ENCODE measurements at regions of chr18 and their contacts with region 1.

Region 1: GRCh38 chr18:32552421-32553030 is 81.8 kb upstream of the GAREM1 start:
- DNase-seq: peak; percentile 78 to 86 (median 84)
- ATAC-seq: peak; percentile 84
- H3K4me3 ChIP-seq: no peak overlapping the region
- H3K27ac ChIP-seq: no peak overlapping the region
- H3K4me1 ChIP-seq: no peaks in the 10 kb centered on the region
- H3K27me3 ChIP-seq: no peaks in the 10 kb centered on the region
- CTCF ChIP-seq: peak; percentile 64 to 93 (median 87)
- POLR2A ChIP-seq: no peak

Region 2: GRCh38 chr18:32158108-32158624 is 394.4 kb before region 1 on chr18:
- intact Hi-C with region 1: loop called (anchors 2 kb)
- DNase-seq: peak; percentile 80 to 87 (median 82)
- ATAC-seq: peak; percentile 98
- H3K4me3 ChIP-seq: no peak overlapping the region
- H3K27ac ChIP-seq: no peak overlapping the region
- H3K4me1 ChIP-seq: peaks cover 8% of the 10 kb centered on the region
- H3K27me3 ChIP-seq: no peaks in the 10 kb centered on the region
- CTCF ChIP-seq: peak; percentile 64 to 95 (median 90)
- POLR2A ChIP-seq: no peak

Region 3: GRCh38 chr18:32383050-32383819 is 169.3 kb before region 1 on chr18:
- intact Hi-C with region 1: no loop called
- DNase-seq: peak in 2 of 4 donors; percentile 63 to 71
- ATAC-seq: peak; percentile 65
- H3K4me3 ChIP-seq: no peak overlapping the region
- H3K27ac ChIP-seq: peak overlapping the region; percentile 15 to 84 (median 78)
- H3K4me1 ChIP-seq: peaks cover 72% of the 10 kb centered on the region
- H3K27me3 ChIP-seq: no peaks in the 10 kb centered on the region
- CTCF ChIP-seq: no peak
- POLR2A ChIP-seq: peak in 1 of 3 donors; percentile 21

Region 4: DNA sequence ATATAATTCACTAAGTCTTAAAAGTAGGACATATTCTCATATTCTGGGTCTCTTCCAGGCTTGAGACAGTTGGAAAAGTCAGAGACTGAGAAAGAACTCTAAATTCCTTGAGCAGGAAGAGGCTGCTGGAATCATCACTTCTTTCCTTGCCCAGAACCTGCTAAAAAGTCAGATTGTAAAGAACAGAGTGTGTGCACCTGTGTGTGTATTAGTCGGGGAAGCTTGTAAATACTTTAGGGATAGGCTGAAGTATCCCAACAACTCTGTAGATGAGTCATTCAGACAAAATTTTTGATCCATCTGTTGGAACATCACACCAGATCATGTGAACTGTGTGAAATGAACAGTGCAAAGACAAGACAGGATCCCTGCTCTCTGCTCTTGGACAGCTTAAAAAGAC is 97.9 kb before region 1 on chr18:
- intact Hi-C with region 1: no loop called
- DNase-seq: no peak
- ATAC-seq: no peak
- H3K4me3 ChIP-seq: no peak overlapping the region
- H3K27ac ChIP-seq: no peak overlapping the region
- H3K4me1 ChIP-seq: peaks cover 58% of the 10 kb centered on the region
- H3K27me3 ChIP-seq: no peaks in the 10 kb centered on the region
- CTCF ChIP-seq: no peak
- POLR2A ChIP-seq: no peak

Region 5: DNA sequence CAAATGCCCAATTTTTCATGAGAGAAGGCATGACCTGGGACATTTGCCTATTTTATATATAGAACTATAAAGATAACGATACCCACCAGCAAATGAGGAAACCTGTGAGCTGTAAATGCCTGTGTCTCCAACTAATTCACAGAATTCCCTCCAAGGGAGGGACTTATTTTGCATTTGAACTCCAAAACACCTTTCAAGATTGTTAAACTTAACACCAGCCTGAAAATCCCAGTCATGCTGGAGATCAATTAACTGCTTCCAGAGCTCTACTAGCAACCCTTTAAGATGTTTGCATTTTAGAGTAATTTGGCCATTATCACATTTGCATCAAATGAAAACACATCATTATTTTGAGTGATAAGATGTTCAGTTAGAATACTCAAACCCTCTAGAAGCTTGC is 288.4 kb after region 1 on chr18:
- intact Hi-C with region 1: no loop called
- DNase-seq: no peak
- ATAC-seq: no peak
- H3K4me3 ChIP-seq: no peak overlapping the region
- H3K27ac ChIP-seq: no peak overlapping the region
- H3K4me1 ChIP-seq: no peaks in the 10 kb centered on the region
- H3K27me3 ChIP-seq: no peaks in the 10 kb centered on the region
- CTCF ChIP-seq: no peak
- POLR2A ChIP-seq: no peak